HCT116 (cell line): ENCODE measurements at regions of chr12 and their contacts with region 1.

Region 1: GRCh38 chr12:69570545-69571399 is 14.5 kb upstream of the CCT2 start:
- DNase-seq: peak; percentile 66
- ATAC-seq: peak; percentile 67
- H3K4me3 ChIP-seq: peak overlapping the region in 1 of 2 experiments; percentile 25; a peak in 1 of 4 replicates
- H3K27ac ChIP-seq: peak overlapping the region; percentile 65; the same call in 1 of the 2 replicates
- H3K4me1 ChIP-seq: peaks cover 11 to 25% of the 10 kb centered on the region in 2 experiments; a peak in 3 of 4 replicates
- H3K27me3 ChIP-seq: no peaks in the 10 kb centered on the region
- CTCF ChIP-seq: peak; percentile 73 to 83 (median 81)
- POLR2A ChIP-seq: no peak
- RAD21 ChIP-seq: peak; percentile 79

Region 2: DNA sequence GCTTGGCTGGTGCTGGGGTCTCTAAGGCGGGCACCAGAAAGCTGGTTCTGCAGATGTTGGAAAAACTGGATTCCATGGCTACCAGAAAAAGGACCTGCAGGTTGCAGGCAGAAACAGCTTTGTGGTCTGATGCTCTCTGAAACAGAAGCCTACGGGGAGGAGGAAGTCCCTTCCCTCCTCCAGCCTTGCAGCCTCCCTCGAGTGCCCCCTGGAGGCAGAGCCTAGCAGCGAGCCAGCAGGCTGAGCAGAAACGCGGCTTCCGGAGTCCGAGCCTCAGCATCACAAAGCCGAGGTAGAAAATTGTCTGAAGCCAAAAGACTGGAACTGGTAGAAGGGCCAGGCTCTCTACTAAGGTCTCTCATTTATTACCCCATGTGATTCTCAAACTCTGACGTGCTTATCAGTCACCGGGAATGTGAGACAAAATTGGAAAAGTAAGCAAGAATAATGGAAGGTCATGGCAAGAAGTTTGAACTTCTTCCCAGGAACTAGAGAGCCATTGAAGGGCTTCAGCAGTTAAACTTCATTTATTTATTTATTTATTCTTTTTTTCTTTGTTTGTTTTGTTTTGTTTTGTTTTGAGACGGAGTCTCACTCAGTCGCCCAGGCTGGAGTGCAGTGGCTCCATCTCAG is 413.6 kb before region 1 on chr12:
- CTCF ChIA-PET with region 1: no interaction called
- POLR2A ChIA-PET with region 1: no interaction called
- RAD21 ChIA-PET with region 1: no interaction called
- intact Hi-C with region 1: loop called (anchors 10 kb)
- DNase-seq: peak; percentile 69
- ATAC-seq: peak; percentile 96
- H3K4me3 ChIP-seq: peak overlapping the region in 1 of 2 experiments; percentile 32; a peak in 2 of 4 replicates
- H3K27ac ChIP-seq: no peak overlapping the region
- H3K4me1 ChIP-seq: peaks cover 3 to 4% of the 10 kb centered on the region in 2 experiments; a peak in 3 of 4 replicates
- H3K27me3 ChIP-seq: no peaks in the 10 kb centered on the region
- CTCF ChIP-seq: peak; percentile 72 to 99 (median 95)
- POLR2A ChIP-seq: no peak
- RAD21 ChIP-seq: peak; percentile 64

Region 3: GRCh38 chr12:69290545-69291277 is 280.1 kb before region 1 on chr12:
- CTCF ChIA-PET with region 1: interaction called, 7 read pairs
- POLR2A ChIA-PET with region 1: no interaction called
- RAD21 ChIA-PET with region 1: no interaction called
- intact Hi-C with region 1: loop called (anchors 2 kb)
- DNase-seq: peak; percentile 81
- ATAC-seq: peak; percentile 100
- H3K4me3 ChIP-seq: no peak overlapping the region
- H3K27ac ChIP-seq: no peak overlapping the region
- H3K4me1 ChIP-seq: no peaks in the 10 kb centered on the region
- H3K27me3 ChIP-seq: no peaks in the 10 kb centered on the region; the same call in 1 of the 2 replicates
- CTCF ChIP-seq: peak; percentile 97
- POLR2A ChIP-seq: no peak
- RAD21 ChIP-seq: peak; percentile 93

Region 4: DNA sequence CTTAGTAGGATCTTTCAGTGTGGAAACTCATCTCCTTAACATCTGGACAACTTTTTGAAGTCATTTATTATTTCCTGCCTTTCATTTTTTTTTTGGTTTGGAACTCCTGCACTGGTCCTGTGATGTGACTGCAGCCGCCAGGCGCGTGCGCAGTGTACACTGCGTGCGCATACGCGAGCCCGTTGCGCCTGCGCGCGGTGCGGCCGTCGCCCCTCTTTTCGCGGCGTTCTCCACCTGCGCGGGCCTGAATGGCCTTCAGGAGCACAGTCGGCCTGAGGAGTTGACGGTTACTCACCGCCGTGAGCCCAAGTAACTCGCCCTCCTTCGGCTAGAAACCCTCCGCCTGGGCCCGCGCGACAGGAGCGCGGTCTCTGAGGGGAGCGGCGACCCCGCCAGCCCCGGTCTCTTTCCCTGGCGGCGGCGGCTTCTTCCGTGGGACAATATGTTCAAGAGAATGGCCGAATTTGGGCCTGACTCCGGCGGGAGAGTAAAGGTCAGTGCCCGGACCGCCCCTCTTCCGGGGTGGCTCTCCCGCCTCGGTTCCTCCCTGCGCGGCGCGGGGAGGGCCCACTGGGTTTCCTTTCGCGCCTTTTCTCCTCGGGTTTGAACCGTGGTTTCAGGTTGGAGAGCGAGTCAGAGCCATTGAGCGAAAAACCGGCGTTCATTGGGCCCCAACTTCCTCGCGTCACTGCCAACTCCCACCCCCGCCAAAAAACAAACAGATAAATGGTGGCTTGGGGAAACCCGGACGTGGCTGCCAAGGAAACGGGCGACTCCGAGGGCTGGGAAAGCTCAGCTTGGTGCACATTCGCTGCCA is 211.0 kb before region 1 on chr12 and contains the start of gene YEATS4:
- CTCF ChIA-PET with region 1: interaction called, 21 read pairs
- POLR2A ChIA-PET with region 1: no interaction called
- RAD21 ChIA-PET with region 1: interaction called in 1 of 2 experiments, 3 read pairs
- intact Hi-C with region 1: loop called (anchors 1 kb)
- DNase-seq: peak; percentile 90
- ATAC-seq: peak; percentile 89
- H3K4me3 ChIP-seq: peak within 1 kb of the TSS; percentile 56 to 63
- H3K27ac ChIP-seq: peak within 1 kb of the TSS; percentile 99
- H3K4me1 ChIP-seq: peaks cover 5 to 24% of the 10 kb centered on the region in 2 experiments; a peak in 3 of 4 replicates
- H3K27me3 ChIP-seq: no peaks in the 10 kb centered on the region
- CTCF ChIP-seq: no peak
- POLR2A ChIP-seq: peak; percentile 24
- RAD21 ChIP-seq: no peak
- total RNA-seq, gene YEATS4: 32.0 TPM

Region 5: GRCh38 chr12:69388371-69388770 is 182.4 kb before region 1 on chr12:
- CTCF ChIA-PET with region 1: interaction called, 35 read pairs
- POLR2A ChIA-PET with region 1: no interaction called
- RAD21 ChIA-PET with region 1: interaction called in 1 of 2 experiments, 4 read pairs
- intact Hi-C with region 1: loop called (anchors 1 kb)
- DNase-seq: peak; percentile 34
- ATAC-seq: peak; percentile 72
- H3K4me3 ChIP-seq: no peak overlapping the region
- H3K27ac ChIP-seq: no peak overlapping the region
- H3K4me1 ChIP-seq: no peaks in the 10 kb centered on the region
- H3K27me3 ChIP-seq: no peaks in the 10 kb centered on the region
- CTCF ChIP-seq: peak; percentile 46 to 63 (median 48); a peak in 5 of 6 replicates
- POLR2A ChIP-seq: no peak
- RAD21 ChIP-seq: peak; percentile 62

Region 6: DNA sequence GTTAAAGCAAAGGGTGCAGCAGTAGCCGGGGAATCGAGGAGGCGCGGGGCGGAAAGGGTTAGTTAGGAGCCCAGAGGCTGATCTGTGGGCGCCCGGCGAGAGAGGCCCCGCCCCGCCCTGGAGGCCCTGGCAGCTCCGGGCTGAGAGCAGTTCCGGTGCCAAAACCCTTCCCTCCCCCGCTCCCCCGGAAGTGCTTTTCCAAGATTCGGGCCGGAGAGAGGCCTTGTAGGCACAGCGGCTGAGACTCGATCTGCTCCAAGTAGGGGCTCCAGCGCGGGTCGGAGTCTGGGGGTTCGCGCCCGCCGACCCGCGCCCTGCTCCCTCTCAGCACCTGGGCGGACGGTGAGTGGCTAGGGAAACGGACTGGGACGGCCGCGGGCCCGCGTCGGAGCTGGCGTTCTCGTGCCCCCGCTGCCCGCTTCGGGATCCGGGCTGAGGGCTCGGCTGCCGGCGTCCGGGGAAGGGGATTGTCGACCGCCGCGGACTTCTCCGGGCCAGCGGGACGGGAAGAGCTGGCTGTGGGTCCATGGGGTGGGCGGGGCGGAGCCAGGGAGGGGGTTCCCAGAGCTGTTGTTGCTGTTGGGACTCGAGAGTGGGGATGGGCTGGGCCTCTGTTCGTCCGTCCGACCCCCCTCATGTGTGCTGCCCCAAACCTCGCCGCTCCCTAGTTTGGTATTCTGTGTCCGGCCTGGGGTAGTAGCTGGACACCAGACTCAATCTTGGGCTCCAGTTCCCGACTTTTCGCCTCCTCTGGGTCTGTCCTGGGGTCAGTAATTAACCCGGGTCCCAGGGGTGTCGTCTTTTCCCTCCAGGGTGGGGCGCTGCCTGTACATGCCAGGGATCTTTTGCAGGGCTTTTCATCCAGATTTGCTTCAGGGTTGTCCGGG is 100.3 kb before region 1 on chr12 and contains the start of gene FRS2:
- CTCF ChIA-PET with region 1: interaction called, 13 read pairs
- POLR2A ChIA-PET with region 1: no interaction called
- RAD21 ChIA-PET with region 1: no interaction called
- intact Hi-C with region 1: loop called (anchors 2 kb)
- DNase-seq: peak; percentile 72
- ATAC-seq: peak; percentile 95
- H3K4me3 ChIP-seq: peak within 1 kb of the TSS; percentile 78 to 87
- H3K27ac ChIP-seq: peak within 1 kb of the TSS; percentile 70
- H3K4me1 ChIP-seq: peaks cover 8 to 10% of the 10 kb centered on the region in 2 experiments; a peak in 3 of 4 replicates
- H3K27me3 ChIP-seq: no peaks in the 10 kb centered on the region
- CTCF ChIP-seq: peak; percentile 36 to 55 (median 52); a peak in 5 of 6 replicates
- POLR2A ChIP-seq: peak; percentile 84
- RAD21 ChIP-seq: peak; percentile 65
- total RNA-seq, gene FRS2: 14.7 TPM

Region 7: GRCh38 chr12:69555461-69555860 is 15.3 kb before region 1 on chr12:
- CTCF ChIA-PET with region 1: interaction called, 12 read pairs
- POLR2A ChIA-PET with region 1: no interaction called
- RAD21 ChIA-PET with region 1: no interaction called
- intact Hi-C with region 1: no loop called
- DNase-seq: no peak
- ATAC-seq: peak; percentile 77; the same call in 1 of the 2 replicates
- H3K4me3 ChIP-seq: no peak overlapping the region
- H3K27ac ChIP-seq: peak overlapping the region; percentile 15; the same call in 1 of the 2 replicates
- H3K4me1 ChIP-seq: peaks cover 15 to 26% of the 10 kb centered on the region in 2 experiments
- H3K27me3 ChIP-seq: no peaks in the 10 kb centered on the region
- CTCF ChIP-seq: no peak
- POLR2A ChIP-seq: no peak
- RAD21 ChIP-seq: no peak